Psoas muscle (tissue), 8 donors: ENCODE measurements at regions of chr15 and their contacts with region 1.

Region 1: DNA sequence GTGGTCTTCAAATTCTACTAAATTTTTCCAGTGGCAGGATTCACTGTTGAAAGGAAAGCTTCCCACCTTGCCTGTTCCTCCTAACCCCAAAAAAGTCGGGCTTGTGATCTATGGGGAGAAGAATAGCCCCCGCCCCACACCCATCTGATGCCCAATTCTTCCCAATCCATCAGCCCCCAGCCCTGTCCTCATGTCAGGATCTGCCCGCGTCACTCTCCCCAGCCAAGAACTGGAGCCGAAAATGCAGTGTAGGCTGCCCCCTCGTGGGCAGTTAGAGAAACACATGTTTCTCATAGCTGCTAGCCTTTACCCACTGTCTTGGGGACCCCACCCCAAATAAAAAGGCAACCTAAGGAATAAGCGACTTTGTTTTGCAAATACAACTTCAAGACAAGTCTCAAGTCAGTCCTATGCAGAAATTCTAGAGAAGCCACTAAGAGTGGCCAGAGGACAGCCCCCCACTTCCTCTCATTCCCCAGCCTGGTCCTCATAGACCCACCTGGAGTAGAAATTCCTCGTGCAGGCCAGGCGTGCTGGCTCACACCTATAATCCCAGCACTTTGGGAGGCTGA is 13.0 kb upstream of the CSK start:
- DNase-seq: peak in 1 of 2 donors; percentile 78
- ATAC-seq: peak; percentile 65 to 82 (median 76)
- H3K4me3 ChIP-seq: no peak overlapping the region
- H3K27ac ChIP-seq: no peak overlapping the region
- H3K4me1 ChIP-seq: no peaks in the 10 kb centered on the region
- H3K27me3 ChIP-seq: peaks cover 0 to under 1% (median 0%) of the 10 kb centered on the region in 3 donors
- CTCF ChIP-seq: peak; percentile 83

Region 2: DNA sequence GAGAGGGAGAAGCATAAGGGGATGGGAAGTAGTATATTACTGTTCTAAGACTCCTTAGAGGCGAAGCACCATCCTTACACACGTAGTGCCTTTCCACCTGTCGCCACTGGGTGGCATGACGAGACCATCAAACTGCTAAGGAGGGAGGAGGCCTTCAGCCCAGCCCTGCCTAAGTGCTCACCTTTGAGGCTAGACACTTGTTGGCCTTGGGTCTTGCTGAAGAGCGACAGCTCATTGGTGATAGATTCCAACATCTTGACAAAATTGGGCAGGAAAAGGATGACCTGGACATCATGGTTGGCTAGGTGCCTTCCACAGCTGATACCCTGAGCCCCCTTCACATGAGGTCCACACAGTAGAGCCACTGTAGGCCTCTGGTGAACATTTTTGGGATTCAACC is 133.6 kb before region 1 on chr15:
- intact Hi-C with region 1: loop called (anchors 1 kb)
- DNase-seq: peak; percentile 66 to 83
- ATAC-seq: peak; percentile 78 to 84 (median 80)
- H3K4me3 ChIP-seq: no peak overlapping the region
- H3K27ac ChIP-seq: no peak overlapping the region
- H3K4me1 ChIP-seq: no peaks in the 10 kb centered on the region
- H3K27me3 ChIP-seq: no peaks in the 10 kb centered on the region
- CTCF ChIP-seq: peak; percentile 90

Region 3: DNA sequence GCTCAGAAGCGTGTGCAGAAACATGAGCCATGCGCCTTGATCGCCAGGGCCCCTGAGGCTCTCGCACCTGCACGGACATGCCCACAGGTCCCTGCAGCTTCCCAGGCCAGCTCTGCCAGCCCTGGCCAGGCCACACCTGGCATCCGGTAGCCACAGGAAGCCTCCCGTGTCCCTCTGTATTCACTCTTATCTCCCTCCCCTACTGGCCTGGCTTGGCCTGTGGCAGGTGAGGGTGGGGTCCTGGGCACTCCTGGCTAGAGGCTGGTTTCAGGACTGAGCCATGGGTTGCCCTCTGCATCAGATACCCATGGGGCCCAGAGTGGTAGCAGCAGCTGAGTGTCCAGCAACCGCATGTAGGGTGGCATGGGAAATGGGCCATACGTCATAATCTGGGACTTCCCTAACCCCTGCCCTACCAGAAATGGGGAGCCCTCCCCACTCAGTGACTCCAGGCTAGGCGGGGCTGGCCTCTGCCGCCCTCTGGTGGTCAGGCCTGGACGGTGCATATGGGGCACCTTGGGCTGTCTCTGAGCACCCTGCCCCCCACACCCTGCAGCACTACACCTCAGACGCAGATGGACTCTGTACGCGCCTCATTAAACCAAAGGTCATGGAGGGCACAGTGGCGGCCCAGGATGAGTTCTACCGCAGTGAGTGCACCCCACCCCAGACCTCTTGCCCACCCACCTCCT is 31.1 kb after region 1 on chr15:
- intact Hi-C with region 1: loop called in 1 of 2 experiments (anchors 1 kb)
- DNase-seq: peak; percentile 82 to 90
- ATAC-seq: peak; percentile 87 to 90 (median 87)
- H3K4me3 ChIP-seq: no peak overlapping the region
- H3K27ac ChIP-seq: peak overlapping the region; percentile 65
- H3K4me1 ChIP-seq: peaks cover 21% of the 10 kb centered on the region
- H3K27me3 ChIP-seq: no peaks in the 10 kb centered on the region
- CTCF ChIP-seq: peak; percentile 97

Region 4: DNA sequence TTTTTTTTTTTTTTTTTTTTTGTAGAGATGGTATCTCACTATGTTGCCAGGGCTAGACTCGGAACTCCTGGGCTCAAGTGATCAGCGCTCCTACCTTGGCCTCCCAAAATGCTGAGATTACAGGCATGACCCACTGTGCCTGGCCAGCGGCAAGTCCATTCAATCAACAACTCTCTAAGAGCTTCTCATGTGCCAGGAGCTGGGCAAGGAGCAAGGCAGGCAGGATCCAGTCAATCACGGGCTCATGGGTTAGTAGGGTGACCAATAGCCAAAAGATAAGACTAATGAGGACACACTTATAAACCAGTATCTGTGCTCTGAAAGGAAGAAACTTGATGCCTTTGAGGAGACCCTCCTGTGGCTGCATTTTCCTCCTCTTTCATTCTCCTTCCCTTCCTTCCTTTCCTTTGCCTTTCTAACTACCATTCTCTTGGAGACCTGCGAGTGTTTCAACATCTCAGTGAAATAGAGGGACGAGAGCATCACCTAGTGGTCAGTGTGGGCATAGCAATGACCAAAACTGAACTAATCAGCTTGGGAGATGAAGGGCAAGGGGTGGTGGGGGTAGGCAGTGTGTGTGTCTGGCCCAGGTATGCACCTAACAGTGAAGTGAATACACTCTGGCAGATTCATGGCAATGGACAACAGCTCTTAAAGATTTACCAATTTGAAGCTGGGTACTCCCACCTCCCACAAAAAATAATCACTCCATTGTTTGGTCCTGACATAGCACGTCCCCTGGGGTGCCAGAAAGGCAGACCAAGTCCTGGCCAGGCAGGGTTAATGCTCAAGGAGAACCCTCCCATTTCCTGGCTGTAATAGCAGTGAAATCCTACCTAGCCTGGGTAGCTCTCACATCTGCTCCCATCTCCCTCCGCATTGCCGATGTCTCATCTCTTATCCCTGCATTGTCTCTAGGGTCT is 181.5 kb after region 1 on chr15:
- intact Hi-C with region 1: loop called (anchors 2 to 5 kb)
- DNase-seq: peak; percentile 52 to 68
- ATAC-seq: peak; percentile 79 to 94 (median 90)
- H3K4me3 ChIP-seq: no peak overlapping the region
- H3K27ac ChIP-seq: no peak overlapping the region
- H3K4me1 ChIP-seq: peaks cover 3% of the 10 kb centered on the region
- H3K27me3 ChIP-seq: peaks cover 0 to 12% (median 0%) of the 10 kb centered on the region in 3 donors
- CTCF ChIP-seq: peak; percentile 93